Dorsolateral prefrontal cortex (tissue), 120 donors: ENCODE measurements at regions of chr9 and their contacts with region 1.

Region 1: GRCh38 chr9:15211160-15211814 is 95.7 kb downstream of the TTC39B start:
- DNase-seq: peak in 4 of 10 donors; percentile 27 to 68 (median 50)
- H3K4me3 ChIP-seq: peak overlapping the region in 2 of 59 donors; percentile 10 to 29
- H3K27ac ChIP-seq: no peak overlapping the region
- H3K27me3 ChIP-seq: no peaks in the 10 kb centered on the region
- CTCF ChIP-seq: peak; percentile 82 to 95 (median 89)

Region 2: GRCh38 chr9:15048772-15049171 is 162.5 kb before region 1 on chr9:
- intact Hi-C with region 1: no loop called
- DNase-seq: no peak
- H3K4me3 ChIP-seq: no peak overlapping the region
- H3K27ac ChIP-seq: no peak overlapping the region
- H3K27me3 ChIP-seq: peaks cover 0 to 3% (median 0%) of the 10 kb centered on the region in 45 donors
- CTCF ChIP-seq: no peak

Region 3: GRCh38 chr9:15286161-15286821 is 75.0 kb after region 1 on chr9:
- intact Hi-C with region 1: loop called in 1 of 2 experiments (anchors 10 kb)
- DNase-seq: no peak
- H3K4me3 ChIP-seq: no peak overlapping the region
- H3K27ac ChIP-seq: no peak overlapping the region
- H3K27me3 ChIP-seq: no peaks in the 10 kb centered on the region
- CTCF ChIP-seq: no peak

Region 4: GRCh38 chr9:15416880-15417279 is 205.6 kb after region 1 on chr9:
- intact Hi-C with region 1: loop called in 1 of 2 experiments (anchors 10 kb)
- DNase-seq: peak in 1 of 10 donors; percentile 15
- H3K4me3 ChIP-seq: no peak overlapping the region
- H3K27ac ChIP-seq: no peak overlapping the region
- H3K27me3 ChIP-seq: no peaks in the 10 kb centered on the region
- CTCF ChIP-seq: peak in 47 of 56 donors; percentile 13 to 66 (median 37)

Region 5: DNA sequence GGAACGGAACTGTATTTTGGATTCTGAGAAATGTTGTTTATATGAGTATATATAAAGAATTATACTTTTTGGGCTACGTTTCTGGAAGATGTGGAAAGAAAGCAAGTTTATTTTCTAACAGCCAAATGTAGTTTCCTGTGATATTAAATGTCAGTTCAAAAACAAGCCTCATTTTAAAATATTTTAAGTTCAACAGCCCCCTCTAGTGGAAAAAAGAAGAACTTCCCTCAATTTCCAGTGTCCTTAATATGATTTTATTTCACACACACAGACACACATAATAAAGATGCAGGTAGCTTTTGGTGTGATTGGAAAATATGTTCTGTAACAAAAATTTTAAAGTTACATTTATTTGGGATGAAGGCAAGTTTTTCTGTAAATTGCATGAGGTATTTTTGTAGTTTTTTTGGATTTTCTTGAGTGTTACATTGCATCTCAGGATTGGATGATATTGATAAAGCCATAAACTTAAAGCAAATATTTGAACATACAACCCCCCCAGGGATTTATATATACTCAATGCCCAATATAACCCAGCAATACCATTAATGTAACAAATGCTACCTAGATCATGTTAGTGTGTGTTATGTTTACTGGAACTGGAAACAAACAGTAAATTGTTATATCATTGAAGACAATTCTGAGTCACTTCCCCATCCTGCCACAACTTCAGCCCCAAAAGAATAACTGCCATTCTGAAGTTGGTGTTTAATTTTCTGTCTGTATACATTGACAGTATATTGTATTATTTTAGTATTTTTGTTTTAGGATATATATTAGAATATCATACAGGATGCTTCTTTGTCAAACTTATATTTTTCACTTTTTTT is 395.6 kb after region 1 on chr9:
- intact Hi-C with region 1: loop called (anchors 2 to 10 kb)
- DNase-seq: no peak
- H3K4me3 ChIP-seq: no peak overlapping the region
- H3K27ac ChIP-seq: no peak overlapping the region
- H3K27me3 ChIP-seq: no peaks in the 10 kb centered on the region
- CTCF ChIP-seq: peak; percentile 78 to 98 (median 86)